Right ventricle myocardium inferior (tissue), 1 donor: ENCODE measurements at regions of chr11 and their contacts with region 1.

Region 1: DNA sequence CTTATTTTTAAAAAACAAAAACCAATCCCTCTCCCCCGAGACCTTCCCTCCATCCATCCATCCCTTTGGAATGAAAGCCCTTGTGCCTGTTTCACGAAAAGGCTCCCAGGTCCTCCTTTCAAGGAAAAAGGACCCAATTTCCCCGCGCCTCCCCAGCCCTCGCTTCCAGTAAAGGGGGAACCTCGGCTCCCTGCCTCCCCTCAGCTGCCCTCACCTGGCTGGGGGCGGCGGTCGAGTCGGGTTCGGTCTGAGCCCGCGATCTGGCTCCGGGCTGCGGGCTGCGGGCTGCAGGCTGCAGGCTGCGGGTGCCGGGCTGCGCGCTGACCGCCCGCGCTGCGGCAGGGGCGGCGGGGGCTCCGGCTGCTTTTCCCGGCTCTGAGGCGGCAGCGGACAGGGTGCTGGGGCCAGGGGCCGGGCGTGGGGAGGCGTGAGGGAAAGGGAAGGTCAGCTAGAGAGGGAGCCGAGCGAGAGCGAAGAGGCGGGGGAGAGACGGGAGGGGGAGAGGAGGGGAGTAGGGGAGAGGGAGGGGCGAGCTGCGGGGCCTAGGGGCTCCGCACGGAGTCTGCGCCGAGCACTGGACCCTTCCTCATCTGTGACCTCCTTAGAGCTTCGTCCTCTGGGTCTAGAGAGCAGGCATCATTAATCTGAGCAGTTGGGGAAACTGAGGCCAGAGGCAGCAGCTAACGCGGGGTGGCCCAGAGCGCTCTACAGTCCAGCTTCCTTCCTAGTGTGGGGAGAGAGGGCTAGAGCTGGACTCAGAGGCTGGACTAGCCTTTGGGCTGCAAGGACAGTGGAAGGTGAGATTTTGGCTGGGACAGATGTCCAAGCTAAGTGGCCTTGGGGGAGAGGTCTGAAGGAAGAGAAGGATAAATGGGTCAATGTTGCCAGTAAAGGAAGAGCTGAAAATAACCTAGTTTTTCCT is at the start of gene C1QTNF4:
- DNase-seq: no peak
- ATAC-seq: no peak
- total RNA-seq, gene C1QTNF4: 0.24 TPM

Region 2: GRCh38 chr11:47609675-47610074 is 15.5 kb after region 1 on chr11:
- intact Hi-C with region 1: loop called (anchors 2 kb)
- DNase-seq: no peak
- ATAC-seq: no peak

Region 3: GRCh38 chr11:47724041-47724729 is 130.0 kb after region 1 on chr11:
- intact Hi-C with region 1: no loop called
- DNase-seq: no peak
- ATAC-seq: peak; percentile 45